Naive thymus-derived CD4-positive, alpha-beta T cell (primary cell): ENCODE measurements at regions of chr1 and their contacts with region 1.

Region 1: DNA sequence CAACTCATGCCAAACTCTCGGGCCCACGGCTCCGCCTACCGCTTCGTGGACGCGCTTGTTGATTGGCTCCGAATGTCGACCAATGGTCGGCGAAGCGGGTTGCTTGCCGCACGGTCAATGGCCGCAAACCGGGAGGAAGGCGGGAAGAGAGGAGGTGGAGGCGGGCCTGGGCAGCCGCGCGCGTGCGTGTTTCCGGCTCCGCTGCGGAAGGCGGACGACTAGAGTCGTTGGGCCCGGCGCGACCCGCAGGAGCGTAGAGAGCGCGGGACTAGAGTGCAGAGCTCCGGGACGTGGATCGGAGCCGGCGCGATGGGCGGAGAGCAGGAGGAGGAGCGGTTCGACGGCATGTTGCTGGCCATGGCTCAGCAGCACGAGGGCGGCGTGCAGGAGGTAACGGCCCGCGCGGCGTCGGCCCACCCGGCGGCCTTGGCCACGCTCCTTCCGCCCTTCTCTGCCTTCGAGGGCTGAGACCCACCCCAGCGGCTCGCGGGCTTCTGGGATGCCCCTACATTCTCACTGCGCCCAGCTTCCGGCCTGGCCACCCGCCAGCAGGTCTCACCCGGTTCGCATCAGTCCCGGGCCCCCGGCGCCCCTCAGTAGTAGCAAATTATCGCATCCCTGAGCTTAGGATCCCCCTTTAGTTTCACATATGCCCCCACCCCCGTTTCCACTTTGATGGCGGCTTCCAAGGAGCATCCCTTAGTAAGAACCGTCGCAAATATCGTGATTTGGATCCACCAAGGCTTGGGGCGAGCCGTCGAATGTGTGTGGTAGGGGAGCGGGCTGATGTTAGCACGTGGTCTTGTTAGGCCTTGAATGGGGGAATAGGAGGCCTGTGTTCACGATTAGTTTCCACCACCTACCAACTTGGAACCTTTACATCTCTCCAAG is at the start of gene NUDC:
- DNase-seq: peak; percentile 87 to 97 (median 95)
- ATAC-seq: peak; percentile 97
- H3K4me3 ChIP-seq: peak within 1 kb of the TSS; percentile 79
- H3K4me3 Mint-ChIP-seq: peak within 1 kb of the TSS; percentile 82 to 98 (median 94)
- H3K27ac ChIP-seq: peak within 1 kb of the TSS; percentile 88
- H3K27ac Mint-ChIP-seq: peak within 1 kb of the TSS; percentile 88 to 98 (median 96)
- H3K4me1 ChIP-seq: peaks cover 11 to 12% of the 10 kb centered on the region in 2 donors
- H3K4me1 Mint-ChIP-seq: peaks cover 12 to 46% (median 34%) of the 10 kb centered on the region in 7 donors
- H3K27me3 ChIP-seq: no peaks in the 10 kb centered on the region
- H3K27me3 Mint-ChIP-seq: no peaks in the 10 kb centered on the region
- total RNA-seq, gene NUDC: 36.5 to 69.0 (median 40.5) TPM

Region 2: DNA sequence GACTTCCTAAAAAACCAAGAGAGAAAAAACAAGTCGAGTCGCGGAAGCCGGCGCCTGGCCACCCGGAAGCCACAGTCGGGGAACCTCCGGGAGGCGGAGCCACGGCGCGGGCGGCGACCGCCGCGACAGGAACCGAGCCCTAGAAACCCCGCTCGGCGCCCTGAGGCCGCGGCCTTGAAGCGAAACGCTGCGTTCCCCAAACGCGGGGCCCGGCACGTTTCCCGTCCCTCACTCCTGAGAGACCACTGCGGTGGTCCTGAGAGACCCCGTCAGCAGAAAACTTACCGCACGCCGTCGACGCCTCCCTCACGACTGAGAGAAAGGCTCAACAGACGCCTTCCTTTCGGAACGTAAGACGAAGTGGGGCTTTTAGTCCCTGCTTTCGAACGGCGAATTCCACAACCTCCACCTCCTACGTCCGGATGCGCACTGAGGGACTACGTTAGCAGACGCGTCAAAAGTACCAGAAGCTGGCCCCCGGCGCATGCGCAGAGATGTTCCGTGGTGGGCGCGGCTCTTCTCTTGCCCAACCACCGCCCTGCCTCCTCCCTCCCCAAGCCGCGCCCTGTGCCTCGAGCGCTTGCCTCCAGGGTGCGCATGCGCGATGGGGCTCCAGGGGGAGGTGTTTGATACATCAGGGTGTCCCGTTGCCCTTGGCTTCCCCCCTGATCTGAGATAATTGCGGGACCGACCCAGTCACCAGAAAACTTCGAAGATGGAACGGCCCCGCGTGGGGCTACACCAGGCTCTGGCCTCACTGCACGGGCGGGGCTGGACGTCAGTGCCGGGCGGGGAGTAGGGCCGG is 1674.6 kb before region 1 on chr1 and contains the start of gene RSRP1:
- CTCF ChIA-PET with region 1: no interaction called
- POLR2A ChIA-PET with region 1: no interaction called
- intact Hi-C with region 1: loop called in 1 of 2 experiments (anchors 5 kb)
- DNase-seq: peak; percentile 99 to 100 (median 99)
- ATAC-seq: peak; percentile 91
- H3K4me3 ChIP-seq: peak within 1 kb of the TSS; percentile 94
- H3K4me3 Mint-ChIP-seq: peak within 1 kb of the TSS; percentile 96 to 99 (median 97)
- H3K27ac ChIP-seq: peak within 1 kb of the TSS; percentile 98
- H3K27ac Mint-ChIP-seq: peak within 1 kb of the TSS; percentile 98 to 100 (median 100)
- H3K4me1 ChIP-seq: peaks cover 30 to 35% of the 10 kb centered on the region in 2 donors
- H3K4me1 Mint-ChIP-seq: peaks cover 28 to 65% (median 51%) of the 10 kb centered on the region in 7 donors
- H3K27me3 ChIP-seq: no peaks in the 10 kb centered on the region
- H3K27me3 Mint-ChIP-seq: peaks cover 0 to 8% (median 0%) of the 10 kb centered on the region in 5 donors
- total RNA-seq, gene RSRP1: 230 to 449 (median 425) TPM

Region 3: DNA sequence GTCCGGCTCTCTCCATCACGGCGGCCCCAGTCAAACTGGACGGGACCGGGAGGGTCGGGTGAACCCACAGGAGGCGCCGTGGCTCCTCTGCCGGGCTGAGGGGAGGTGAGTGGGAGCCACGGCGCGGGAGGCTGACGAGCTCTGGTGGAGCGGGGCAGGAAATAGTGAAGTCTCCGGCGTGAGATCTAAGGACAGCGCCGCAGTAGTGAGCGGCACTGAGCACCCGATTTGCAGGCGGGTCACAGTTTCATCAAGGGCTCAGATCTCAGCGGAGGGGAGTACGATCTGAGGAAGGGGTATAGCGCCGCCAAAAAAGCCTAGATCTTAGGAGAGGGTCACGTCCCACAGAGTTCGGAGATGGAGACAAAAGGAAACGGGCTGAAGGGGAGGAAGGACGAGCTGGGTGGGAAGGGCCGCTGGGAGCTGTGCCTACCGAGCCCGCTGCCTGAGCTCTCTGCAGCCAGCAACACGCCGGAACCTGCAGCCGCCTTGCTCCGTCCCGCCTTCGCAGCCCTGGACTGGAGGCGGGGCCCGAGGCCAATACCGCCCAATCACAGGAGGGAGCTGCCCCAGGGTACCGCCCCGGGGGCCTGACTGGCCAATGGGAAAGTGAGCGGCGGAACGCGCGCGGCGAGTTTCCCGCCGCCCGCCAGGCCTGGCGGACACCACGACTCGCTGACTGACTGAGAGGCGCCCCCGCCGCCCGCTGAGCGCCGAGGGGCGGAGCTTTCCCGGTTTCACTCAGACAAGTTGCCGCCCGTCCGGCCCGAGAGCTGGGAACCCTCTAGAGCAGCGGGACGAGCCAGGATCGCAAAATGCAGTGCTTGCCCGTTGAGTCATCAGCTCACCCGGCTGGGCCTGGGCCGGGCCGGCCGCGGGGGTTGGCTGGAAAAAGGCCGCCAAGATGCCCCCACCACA is 56.9 kb before region 1 on chr1:
- CTCF ChIA-PET with region 1: no interaction called
- POLR2A ChIA-PET with region 1: interaction called, 3 read pairs
- intact Hi-C with region 1: loop called (anchors 1 kb)
- DNase-seq: peak; percentile 88 to 96 (median 91)
- ATAC-seq: peak; percentile 98
- H3K4me3 ChIP-seq: peak overlapping the region; percentile 97
- H3K4me3 Mint-ChIP-seq: peak overlapping the region; percentile 86 to 100 (median 96)
- H3K27ac ChIP-seq: peak overlapping the region; percentile 78
- H3K27ac Mint-ChIP-seq: peak overlapping the region; percentile 65 to 96 (median 93)
- H3K4me1 ChIP-seq: peaks cover 5 to 10% of the 10 kb centered on the region in 2 donors
- H3K4me1 Mint-ChIP-seq: peaks cover 10 to 33% (median 24%) of the 10 kb centered on the region in 7 donors
- H3K27me3 ChIP-seq: no peaks in the 10 kb centered on the region
- H3K27me3 Mint-ChIP-seq: no peaks in the 10 kb centered on the region

Region 4: GRCh38 chr1:26900001-26900814 is 21.6 kb before region 1 on chr1 and contains the start of gene GPATCH3:
- CTCF ChIA-PET with region 1: interaction called, 3 read pairs
- POLR2A ChIA-PET with region 1: interaction called, 25 read pairs
- intact Hi-C with region 1: loop called (anchors 1 kb)
- DNase-seq: peak; percentile 68 to 89 (median 86)
- ATAC-seq: peak; percentile 93
- H3K4me3 ChIP-seq: peak within 1 kb of the TSS; percentile 94
- H3K4me3 Mint-ChIP-seq: peak within 1 kb of the TSS; percentile 87 to 99 (median 96)
- H3K27ac ChIP-seq: peak within 1 kb of the TSS; percentile 90
- H3K27ac Mint-ChIP-seq: peak within 1 kb of the TSS; percentile 94 to 100 (median 99)
- H3K4me1 ChIP-seq: peaks cover 10 to 16% of the 10 kb centered on the region in 2 donors
- H3K4me1 Mint-ChIP-seq: peaks cover 24 to 46% (median 39%) of the 10 kb centered on the region in 7 donors
- H3K27me3 ChIP-seq: no peaks in the 10 kb centered on the region
- H3K27me3 Mint-ChIP-seq: no peaks in the 10 kb centered on the region
- total RNA-seq, gene GPATCH3: 17.0 to 38.4 (median 22.6) TPM

Region 5: DNA sequence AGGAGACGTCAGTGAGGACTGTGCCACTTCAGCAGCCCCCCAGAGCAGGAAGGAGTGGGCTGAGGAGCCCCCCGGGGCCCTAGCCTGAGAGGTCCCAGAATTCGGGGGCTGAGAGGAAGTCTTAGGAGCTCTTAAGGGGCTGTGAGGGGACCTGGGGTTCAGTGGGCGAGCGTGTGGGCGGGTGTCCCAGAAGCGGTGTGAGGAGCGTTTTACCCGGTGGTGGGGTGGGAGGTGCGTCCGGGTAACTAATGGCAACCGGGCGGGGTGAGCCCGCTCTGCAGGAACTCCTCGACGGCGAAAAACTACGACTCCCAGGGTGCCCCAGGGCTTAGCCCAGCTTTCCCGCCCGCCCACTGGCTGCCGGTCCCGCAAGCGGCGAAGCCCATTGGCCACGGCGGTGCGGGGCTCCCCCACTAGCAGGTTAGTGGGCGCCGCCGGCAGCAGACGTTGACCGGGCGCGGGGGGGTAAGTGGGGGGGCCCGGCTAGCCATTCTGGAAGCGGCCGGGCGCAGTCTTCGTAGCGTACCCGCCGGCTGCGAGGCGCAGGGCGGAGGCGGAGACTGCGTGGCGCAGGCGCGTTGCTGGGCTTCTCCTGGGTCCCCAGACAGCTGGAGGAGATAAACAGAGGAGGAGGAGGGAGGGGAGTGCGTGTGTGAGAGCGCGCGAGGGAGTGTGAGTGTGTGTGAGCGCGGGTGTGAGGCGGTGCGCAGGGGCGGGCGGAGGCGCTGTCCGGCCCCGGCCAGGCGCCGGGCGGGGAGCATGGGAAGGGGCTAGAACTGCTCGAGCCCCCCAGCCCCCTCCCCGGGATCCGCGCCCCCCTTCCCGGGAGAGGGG is 312.5 kb after region 1 on chr1 and contains the start of gene WDTC1:
- CTCF ChIA-PET with region 1: no interaction called
- POLR2A ChIA-PET with region 1: no interaction called
- intact Hi-C with region 1: loop called (anchors 1 kb)
- DNase-seq: peak; percentile 91 to 98 (median 97)
- ATAC-seq: peak; percentile 96
- H3K4me3 ChIP-seq: peak within 1 kb of the TSS; percentile 78
- H3K4me3 Mint-ChIP-seq: peak within 1 kb of the TSS; percentile 95 to 100 (median 98)
- H3K27ac ChIP-seq: peak within 1 kb of the TSS; percentile 78
- H3K27ac Mint-ChIP-seq: peak within 1 kb of the TSS; percentile 83 to 97 (median 96)
- H3K4me1 ChIP-seq: peaks cover 18 to 25% of the 10 kb centered on the region in 2 donors
- H3K4me1 Mint-ChIP-seq: peaks cover 25 to 39% (median 35%) of the 10 kb centered on the region in 7 donors
- H3K27me3 ChIP-seq: no peaks in the 10 kb centered on the region
- H3K27me3 Mint-ChIP-seq: peaks cover 0 to 3% (median 0%) of the 10 kb centered on the region in 5 donors
- total RNA-seq, gene WDTC1: 33.2 to 59.0 (median 46.3) TPM

Region 6: GRCh38 chr1:27366411-27367159 is 444.8 kb after region 1 on chr1 and contains the start of gene MAP3K6:
- CTCF ChIA-PET with region 1: no interaction called
- POLR2A ChIA-PET with region 1: no interaction called
- intact Hi-C with region 1: no loop called
- DNase-seq: peak in 6 of 9 donors; percentile 20 to 71 (median 32)
- ATAC-seq: peak; percentile 59
- H3K4me3 ChIP-seq: peak within 1 kb of the TSS; percentile 61
- H3K4me3 Mint-ChIP-seq: peak within 1 kb of the TSS; percentile 76 to 93 (median 89)
- H3K27ac ChIP-seq: peak within 1 kb of the TSS; percentile 60
- H3K27ac Mint-ChIP-seq: peak within 1 kb of the TSS; percentile 54 to 90 (median 73)
- H3K4me1 ChIP-seq: peaks cover 13 to 17% of the 10 kb centered on the region in 2 donors
- H3K4me1 Mint-ChIP-seq: peaks cover 21 to 52% (median 41%) of the 10 kb centered on the region in 7 donors
- H3K27me3 ChIP-seq: no peaks in the 10 kb centered on the region
- H3K27me3 Mint-ChIP-seq: no peaks in the 10 kb centered on the region
- total RNA-seq, gene MAP3K6: 13.0 to 17.0 (median 15.2) TPM

Region 7: DNA sequence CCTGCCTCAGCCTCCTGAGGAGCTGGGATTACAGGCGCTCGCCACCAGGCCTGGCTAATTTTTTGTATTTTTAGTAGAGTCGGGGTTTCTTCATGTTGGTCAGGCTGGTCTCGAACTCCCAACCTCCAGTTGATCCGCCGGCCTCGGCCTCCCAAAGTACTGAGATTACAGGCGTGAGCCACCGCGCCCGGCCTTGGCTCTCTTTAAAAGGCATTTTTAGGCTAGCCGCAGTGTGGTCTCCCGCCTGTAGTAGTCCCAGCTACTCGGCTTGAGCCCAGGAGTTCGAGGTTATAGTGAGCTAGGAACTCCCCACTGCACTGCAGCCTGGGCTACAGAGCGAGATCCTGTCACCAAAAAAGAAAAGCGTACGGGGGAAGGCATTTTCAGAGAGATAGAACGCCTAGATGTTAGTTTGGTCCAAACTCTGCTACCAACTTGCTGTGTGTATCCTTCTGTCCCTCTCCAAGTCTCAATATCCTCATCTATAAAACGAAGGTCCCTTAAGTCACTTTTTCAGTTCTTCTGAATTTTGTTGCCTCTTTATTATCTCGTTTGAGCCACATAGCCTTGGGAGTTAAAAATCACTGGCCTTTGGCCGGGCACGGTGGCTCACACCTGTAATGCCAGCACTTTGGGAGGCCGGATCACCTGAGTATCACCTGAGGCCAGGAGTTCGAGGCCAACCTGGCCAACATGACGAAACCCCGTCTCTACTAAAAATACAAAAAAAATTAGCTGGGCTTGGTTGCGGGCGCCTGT is 1407.8 kb after region 1 on chr1:
- CTCF ChIA-PET with region 1: no interaction called
- POLR2A ChIA-PET with region 1: no interaction called
- intact Hi-C with region 1: loop called in 1 of 2 experiments (anchors 5 kb)
- DNase-seq: peak in 2 of 9 donors; percentile 32 to 48
- ATAC-seq: peak; percentile 14
- H3K4me3 ChIP-seq: peak overlapping the region; percentile 59
- H3K4me3 Mint-ChIP-seq: peak overlapping the region; percentile 89 to 98 (median 92)
- H3K27ac ChIP-seq: peak overlapping the region; percentile 86
- H3K27ac Mint-ChIP-seq: peak overlapping the region; percentile 92 to 100 (median 98)
- H3K4me1 ChIP-seq: peaks cover 13 to 14% of the 10 kb centered on the region in 2 donors
- H3K4me1 Mint-ChIP-seq: peaks cover 20 to 40% (median 39%) of the 10 kb centered on the region in 7 donors
- H3K27me3 ChIP-seq: no peaks in the 10 kb centered on the region
- H3K27me3 Mint-ChIP-seq: peaks cover 0 to 3% (median 0%) of the 10 kb centered on the region in 5 donors